ENCODE measurements at regions of chr10 and their contacts with region 1.

Region 1: DNA sequence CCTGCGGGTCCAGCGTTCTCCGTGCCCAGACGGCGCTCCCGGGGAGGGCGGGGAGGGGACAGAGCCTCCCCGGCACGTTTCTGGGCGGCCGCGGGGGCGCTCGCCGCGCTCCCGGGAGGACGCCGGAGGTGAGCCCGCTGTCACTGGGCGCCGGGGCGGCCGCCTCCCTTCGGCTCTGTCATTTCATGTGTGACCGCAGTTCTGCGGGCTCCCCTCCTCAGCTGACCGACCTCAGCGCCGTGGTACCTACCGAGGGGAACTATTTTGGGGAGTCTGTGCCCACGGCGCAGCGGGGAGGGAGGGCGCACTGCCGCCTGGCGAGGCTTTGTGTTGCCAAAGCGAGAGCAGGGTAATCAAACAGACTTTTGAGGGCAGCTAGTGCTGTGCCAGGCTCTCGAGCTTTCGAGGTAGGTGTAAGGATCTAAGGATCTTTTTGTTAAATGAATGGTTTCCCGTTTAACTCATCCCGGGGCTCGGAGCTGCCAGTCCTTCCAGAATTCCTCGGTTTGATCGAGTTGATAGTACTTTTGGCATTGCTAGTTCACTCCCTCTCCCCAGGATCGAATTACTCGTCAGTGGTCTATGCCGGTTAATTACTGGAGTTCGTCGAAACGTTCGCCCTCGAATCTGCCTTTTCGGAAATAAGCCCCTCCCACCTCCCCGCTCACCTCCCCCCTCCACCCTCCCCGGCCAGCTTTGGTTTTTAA is 1.9 kb downstream of the ARID5B start:
- DNase-seq: peak; percentile 86
- ATAC-seq: peak; percentile 46
- H3K4me3 Mint-ChIP-seq: peak overlapping the region; percentile 94
- H3K27ac Mint-ChIP-seq: peak overlapping the region; percentile 100
- H3K4me1 Mint-ChIP-seq: peaks cover 40% of the 10 kb centered on the region
- H3K27me3 Mint-ChIP-seq: no peaks in the 10 kb centered on the region

Region 2: DNA sequence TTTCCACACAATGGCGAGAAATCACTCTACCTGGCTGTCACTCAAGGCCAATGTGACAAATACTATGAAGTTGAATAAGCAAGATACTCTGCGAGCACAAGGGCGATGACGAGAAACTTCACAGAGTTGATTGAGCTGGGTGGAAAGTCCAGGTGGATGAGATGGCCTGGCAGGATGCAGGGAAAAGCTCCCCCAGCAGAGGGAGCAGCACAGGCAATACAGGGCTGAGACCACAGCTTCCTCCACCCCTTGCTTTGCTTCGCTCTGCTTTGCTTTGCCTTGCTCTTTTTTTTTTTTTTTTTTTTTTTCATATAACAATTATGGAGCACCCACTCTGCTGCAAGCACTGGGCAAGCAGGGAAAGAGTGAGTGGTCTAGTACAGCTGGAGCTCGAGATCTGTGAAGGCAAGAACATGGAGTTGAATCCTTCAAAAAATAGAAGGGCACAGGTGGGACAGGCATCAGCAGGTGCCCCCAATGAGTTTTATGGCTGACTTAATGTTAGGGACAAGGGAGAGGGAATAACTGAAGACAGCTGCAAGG is 152.4 kb before region 1 on chr10:
- CTCF ChIA-PET with region 1: interaction called, 5 read pairs
- POLR2A ChIA-PET with region 1: no interaction called
- intact Hi-C with region 1: loop called (anchors 2 to 5 kb)
- DNase-seq: peak; percentile 81
- ATAC-seq: peak; percentile 91
- H3K4me3 Mint-ChIP-seq: no peak overlapping the region
- H3K27ac Mint-ChIP-seq: peak overlapping the region; percentile 51
- H3K4me1 Mint-ChIP-seq: peaks cover 33% of the 10 kb centered on the region
- H3K27me3 Mint-ChIP-seq: no peaks in the 10 kb centered on the region

Region 3: DNA sequence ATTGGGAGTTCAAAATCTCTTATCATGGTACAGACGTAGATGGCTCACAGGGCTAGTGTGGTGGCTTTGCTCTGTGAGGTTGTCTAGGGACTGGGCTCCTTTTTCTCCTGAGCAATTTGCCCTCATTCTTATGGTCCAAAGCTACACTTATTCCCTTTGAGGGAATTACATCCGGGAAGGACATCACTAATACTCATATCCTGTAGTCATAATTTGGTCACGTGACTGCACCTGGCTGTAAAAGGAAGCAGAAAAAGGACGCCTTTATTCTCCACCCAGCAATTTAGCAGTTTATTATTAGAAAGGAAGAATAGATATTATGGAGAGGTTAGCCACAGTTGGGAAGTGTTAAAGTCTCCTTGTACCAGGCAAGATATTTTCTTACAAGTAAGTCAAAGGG is 26.2 kb after region 1 on chr10:
- CTCF ChIA-PET with region 1: interaction called, 7 read pairs
- POLR2A ChIA-PET with region 1: interaction called, 4 read pairs
- intact Hi-C with region 1: loop called in 1 of 2 experiments (anchors 2 kb)
- DNase-seq: no peak
- ATAC-seq: no peak
- H3K4me3 Mint-ChIP-seq: no peak overlapping the region
- H3K27ac Mint-ChIP-seq: no peak overlapping the region
- H3K4me1 Mint-ChIP-seq: peaks cover 53% of the 10 kb centered on the region
- H3K27me3 Mint-ChIP-seq: no peaks in the 10 kb centered on the region

Region 4: GRCh38 chr10:61943674-61944410 is 40.5 kb after region 1 on chr10:
- CTCF ChIA-PET with region 1: interaction called, 9 read pairs
- POLR2A ChIA-PET with region 1: interaction called, 21 read pairs
- intact Hi-C with region 1: loop called (anchors 1 kb)
- DNase-seq: peak; percentile 51
- ATAC-seq: peak; percentile 78
- H3K4me3 Mint-ChIP-seq: peak overlapping the region; percentile 59
- H3K27ac Mint-ChIP-seq: peak overlapping the region; percentile 98
- H3K4me1 Mint-ChIP-seq: peaks cover 71% of the 10 kb centered on the region
- H3K27me3 Mint-ChIP-seq: no peaks in the 10 kb centered on the region

Region 5: DNA sequence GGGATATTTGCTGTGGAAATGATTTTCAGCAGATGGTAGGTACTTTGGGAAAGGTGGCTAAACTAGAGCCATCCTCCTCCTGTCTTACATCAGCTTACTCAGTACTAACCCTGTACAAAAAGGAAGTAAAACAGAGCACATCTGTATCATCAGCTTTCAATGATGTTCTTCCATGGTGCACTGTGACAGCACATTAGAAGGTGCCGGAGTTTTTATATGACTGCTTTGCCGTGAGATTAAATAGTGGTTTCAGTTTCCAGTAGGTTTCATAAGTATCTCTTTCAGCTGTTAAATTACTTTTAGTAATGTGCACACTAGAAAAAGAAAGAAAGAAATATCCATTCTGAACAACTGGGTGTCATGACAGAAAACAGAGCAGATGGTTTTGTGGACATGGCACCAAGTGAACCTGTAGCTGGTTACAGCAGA is 84.6 kb after region 1 on chr10:
- CTCF ChIA-PET with region 1: interaction called, 15 read pairs
- POLR2A ChIA-PET with region 1: interaction called, 16 read pairs
- intact Hi-C with region 1: loop called (anchors 1 kb)
- DNase-seq: peak; percentile 40
- ATAC-seq: peak; percentile 89
- H3K4me3 Mint-ChIP-seq: peak overlapping the region; percentile 29
- H3K27ac Mint-ChIP-seq: peak overlapping the region; percentile 99
- H3K4me1 Mint-ChIP-seq: peaks cover 92% of the 10 kb centered on the region
- H3K27me3 Mint-ChIP-seq: no peaks in the 10 kb centered on the region

Region 6: GRCh38 chr10:62019013-62019684 is 115.8 kb after region 1 on chr10:
- CTCF ChIA-PET with region 1: interaction called, 5 read pairs
- POLR2A ChIA-PET with region 1: interaction called, 9 read pairs
- intact Hi-C with region 1: loop called in 1 of 2 experiments (anchors 1 kb)
- DNase-seq: no peak
- ATAC-seq: no peak
- H3K4me3 Mint-ChIP-seq: peak overlapping the region; percentile 11
- H3K27ac Mint-ChIP-seq: peak overlapping the region; percentile 100
- H3K4me1 Mint-ChIP-seq: peaks cover 88% of the 10 kb centered on the region
- H3K27me3 Mint-ChIP-seq: no peaks in the 10 kb centered on the region

Region 7: DNA sequence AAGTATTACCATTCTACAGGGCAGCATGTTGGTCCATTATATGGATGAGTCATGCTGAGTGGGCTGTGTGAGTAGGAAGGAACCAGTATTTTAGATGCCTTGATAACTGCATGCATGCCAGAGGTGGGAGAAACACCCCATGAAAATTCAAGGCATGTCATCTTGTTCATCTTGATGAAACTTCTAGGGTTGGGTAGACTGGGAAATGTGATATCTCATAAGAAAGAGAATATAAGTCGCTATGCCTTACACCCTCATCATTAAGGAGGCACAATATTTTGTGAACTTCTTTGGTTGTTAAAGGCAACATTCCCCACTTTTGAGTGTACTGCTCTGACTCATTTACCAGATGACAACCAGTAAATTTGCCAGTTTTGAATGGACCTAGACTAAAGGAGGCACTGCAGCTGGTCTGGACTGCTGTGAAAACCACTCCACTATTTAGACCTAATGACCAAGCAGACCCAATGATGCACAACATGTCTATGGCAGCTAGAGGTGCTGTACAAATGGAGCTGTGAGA is 518.8 kb after region 1 on chr10:
- CTCF ChIA-PET with region 1: no interaction called
- POLR2A ChIA-PET with region 1: no interaction called
- intact Hi-C with region 1: loop called in 1 of 2 experiments (anchors 5 kb)
- DNase-seq: no peak
- ATAC-seq: no peak
- H3K4me3 Mint-ChIP-seq: no peak overlapping the region
- H3K27ac Mint-ChIP-seq: no peak overlapping the region
- H3K4me1 Mint-ChIP-seq: peaks cover 23% of the 10 kb centered on the region
- H3K27me3 Mint-ChIP-seq: peaks cover 10% of the 10 kb centered on the region